ENCODE measurements at regions of chr14 and their contacts with region 1.

Region 1: DNA sequence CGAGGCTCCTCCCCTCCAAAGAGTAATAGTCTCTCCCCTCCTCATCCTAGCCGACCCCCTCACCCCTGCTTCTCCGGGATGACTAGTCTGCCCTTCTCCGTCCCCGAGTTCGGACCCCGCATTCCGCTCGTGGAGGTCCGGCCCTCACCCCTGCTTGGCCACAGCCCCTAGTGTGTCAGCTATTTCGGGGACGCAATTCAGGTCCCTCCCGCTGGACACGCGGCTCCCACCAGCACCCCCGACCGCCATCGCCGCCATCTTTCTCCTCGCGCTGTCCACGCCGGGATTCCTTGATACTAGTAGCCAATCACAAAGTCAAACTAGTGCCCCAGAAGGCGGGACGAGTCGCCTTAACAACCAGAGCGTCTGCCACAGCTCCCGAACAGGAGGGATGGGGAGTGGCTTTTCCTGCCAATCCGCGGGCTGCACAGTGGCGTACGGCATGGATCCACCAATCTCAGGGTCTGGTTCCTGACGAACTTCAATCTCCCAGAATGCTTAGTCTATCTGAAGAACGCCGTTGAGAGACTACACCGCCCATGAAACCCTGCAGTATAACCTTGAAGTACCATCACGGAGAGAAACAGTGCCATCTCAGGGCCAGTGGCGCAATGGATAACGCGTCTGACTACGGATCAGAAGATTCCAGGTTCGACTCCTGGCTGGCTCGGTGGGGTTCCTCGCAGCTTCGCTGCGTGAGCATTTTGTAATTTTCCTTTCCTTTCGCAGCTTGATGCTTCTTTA is at the start of gene PRMT5:
- DNase-seq: peak; percentile 93 to 100 (median 97)
- ATAC-seq: peak; percentile 96
- H3K4me3 ChIP-seq: peak within 1 kb of the TSS; percentile 91
- H3K4me3 Mint-ChIP-seq: no peak within 1 kb of the TSS
- H3K27ac ChIP-seq: peak within 1 kb of the TSS; percentile 79 to 88
- H3K27ac Mint-ChIP-seq: no peak within 1 kb of the TSS
- H3K4me1 ChIP-seq: peaks cover 30% of the 10 kb centered on the region
- H3K4me1 Mint-ChIP-seq: peaks cover 11% of the 10 kb centered on the region
- H3K27me3 ChIP-seq: no peaks in the 10 kb centered on the region
- H3K27me3 Mint-ChIP-seq: no peaks in the 10 kb centered on the region
- CTCF ChIP-seq: no peak
- total RNA-seq, gene PRMT5: 15.6 to 19.3 TPM

Region 2: DNA sequence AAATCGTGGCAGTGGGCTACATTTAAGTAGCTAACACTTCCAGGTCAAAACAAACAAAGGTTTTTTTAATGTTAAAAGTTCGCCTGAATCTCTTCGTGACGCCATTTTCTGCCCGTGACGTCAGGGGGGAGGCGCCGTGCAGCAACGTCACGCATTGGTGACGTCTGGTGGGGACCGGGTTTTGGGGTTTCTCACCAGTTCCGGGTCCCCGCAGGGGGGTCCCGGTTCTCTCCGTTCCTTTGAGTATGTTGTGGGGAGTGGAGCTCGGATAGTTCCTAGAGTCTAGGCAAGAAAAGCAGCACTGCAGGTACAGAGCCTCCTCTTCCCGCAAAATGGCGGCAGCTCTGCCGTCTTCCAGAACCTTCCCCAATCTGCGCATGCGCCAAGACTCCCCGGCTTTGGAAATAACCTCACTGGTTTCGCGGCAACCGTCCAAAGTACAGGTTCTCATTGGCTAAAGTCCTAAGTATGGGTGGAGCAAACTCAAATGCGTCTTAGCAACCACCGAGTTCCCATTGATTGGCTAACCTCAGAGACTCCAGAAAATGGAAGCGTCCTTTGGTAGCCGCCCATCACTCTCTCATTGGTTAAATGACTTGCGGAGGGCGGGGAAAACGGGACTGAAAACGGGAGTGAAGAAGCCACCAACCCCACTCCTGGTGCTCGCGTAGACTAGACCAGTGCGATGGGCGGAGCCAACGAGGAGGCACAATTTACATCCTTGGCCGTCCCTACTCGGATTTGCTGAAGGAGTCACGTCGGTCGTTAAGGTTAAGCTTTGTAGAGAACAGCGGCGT is 10.3 kb before region 1 on chr14 and contains the start of gene RBM23:
- CTCF ChIA-PET with region 1: interaction called, 16 read pairs
- POLR2A ChIA-PET with region 1: interaction called, 68 read pairs
- intact Hi-C with region 1: loop called (anchors 1 kb)
- DNase-seq: peak; percentile 99 to 100 (median 100)
- ATAC-seq: peak; percentile 84
- H3K4me3 ChIP-seq: peak within 1 kb of the TSS; percentile 74
- H3K4me3 Mint-ChIP-seq: peak within 1 kb of the TSS; percentile 88
- H3K27ac ChIP-seq: peak within 1 kb of the TSS; percentile 99 to 100
- H3K27ac Mint-ChIP-seq: peak within 1 kb of the TSS; percentile 100
- H3K4me1 ChIP-seq: peaks cover 38% of the 10 kb centered on the region
- H3K4me1 Mint-ChIP-seq: peaks cover 50% of the 10 kb centered on the region
- H3K27me3 ChIP-seq: no peaks in the 10 kb centered on the region
- H3K27me3 Mint-ChIP-seq: peaks cover 4% of the 10 kb centered on the region
- CTCF ChIP-seq: no peak
- total RNA-seq, gene RBM23: 87.9 to 111 TPM

Region 3: DNA sequence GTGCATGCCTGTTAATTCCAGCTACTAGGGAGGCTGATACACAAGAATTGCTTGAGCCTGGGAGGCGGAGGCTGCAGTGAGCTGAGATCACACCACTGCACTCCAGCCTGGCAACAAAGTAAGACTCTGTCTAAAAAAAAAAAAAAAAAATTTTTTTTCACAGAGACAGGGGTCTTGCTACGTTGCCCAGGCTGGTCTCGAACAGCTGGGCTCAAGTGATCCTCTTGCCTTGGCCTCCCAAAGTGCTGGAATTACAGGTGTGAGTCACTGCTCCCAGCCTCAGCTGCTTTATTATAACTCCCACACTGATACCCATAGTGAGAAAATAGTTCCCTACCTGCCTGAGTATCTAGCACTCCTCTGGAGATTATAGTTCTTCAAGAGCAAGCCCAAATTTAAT is 16.4 kb after region 1 on chr14:
- CTCF ChIA-PET with region 1: interaction called, 4 read pairs
- POLR2A ChIA-PET with region 1: interaction called, 10 read pairs
- intact Hi-C with region 1: no loop called
- DNase-seq: no peak
- ATAC-seq: no peak
- H3K4me3 ChIP-seq: no peak overlapping the region
- H3K4me3 Mint-ChIP-seq: no peak overlapping the region
- H3K27ac ChIP-seq: no peak overlapping the region
- H3K27ac Mint-ChIP-seq: no peak overlapping the region
- H3K4me1 ChIP-seq: no peaks in the 10 kb centered on the region
- H3K4me1 Mint-ChIP-seq: no peaks in the 10 kb centered on the region
- H3K27me3 ChIP-seq: no peaks in the 10 kb centered on the region
- H3K27me3 Mint-ChIP-seq: no peaks in the 10 kb centered on the region
- CTCF ChIP-seq: no peak

Region 4: GRCh38 chr14:22955702-22956569 is 26.7 kb after region 1 on chr14:
- CTCF ChIA-PET with region 1: interaction called, 8 read pairs
- POLR2A ChIA-PET with region 1: interaction called, 42 read pairs
- intact Hi-C with region 1: loop called (anchors 1 to 2 kb)
- DNase-seq: no peak
- ATAC-seq: no peak
- H3K4me3 ChIP-seq: peak overlapping the region; percentile 89
- H3K4me3 Mint-ChIP-seq: peak overlapping the region; percentile 92
- H3K27ac ChIP-seq: peak overlapping the region; percentile 63 to 83
- H3K27ac Mint-ChIP-seq: peak overlapping the region; percentile 83
- H3K4me1 ChIP-seq: peaks cover 21% of the 10 kb centered on the region
- H3K4me1 Mint-ChIP-seq: peaks cover 18% of the 10 kb centered on the region
- H3K27me3 ChIP-seq: no peaks in the 10 kb centered on the region
- H3K27me3 Mint-ChIP-seq: no peaks in the 10 kb centered on the region
- CTCF ChIP-seq: no peak

Region 5: DNA sequence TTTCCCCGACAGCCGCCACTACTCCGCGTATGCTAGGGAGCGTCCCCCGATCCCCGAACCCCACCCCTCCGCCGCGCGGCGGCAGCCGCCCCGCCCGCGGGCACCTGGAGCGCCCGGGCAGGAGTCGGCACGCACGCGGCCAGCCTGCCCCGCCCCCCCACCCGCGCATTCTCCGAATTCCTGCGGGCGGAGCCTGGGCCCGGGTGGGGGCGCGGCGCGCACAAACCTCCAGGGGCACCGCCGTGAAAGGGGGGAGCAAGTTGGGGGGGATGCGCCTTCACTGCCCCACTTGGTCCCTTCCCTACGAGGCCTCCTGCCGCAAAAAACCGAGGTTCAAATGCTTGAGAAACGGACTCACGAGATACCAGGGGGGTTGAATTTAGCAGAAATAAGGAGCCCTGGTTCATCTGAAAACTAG is 51.4 kb after region 1 on chr14:
- CTCF ChIA-PET with region 1: interaction called, 17 read pairs
- POLR2A ChIA-PET with region 1: interaction called, 11 read pairs
- intact Hi-C with region 1: loop called (anchors 2 kb)
- DNase-seq: peak in 8 of 14 experiments; percentile 6 to 64 (median 33)
- ATAC-seq: peak; percentile 28
- H3K4me3 ChIP-seq: peak overlapping the region; percentile 84
- H3K4me3 Mint-ChIP-seq: peak overlapping the region; percentile 78
- H3K27ac ChIP-seq: no peak overlapping the region
- H3K27ac Mint-ChIP-seq: no peak overlapping the region
- H3K4me1 ChIP-seq: peaks cover 34% of the 10 kb centered on the region
- H3K4me1 Mint-ChIP-seq: peaks cover 9% of the 10 kb centered on the region
- H3K27me3 ChIP-seq: peaks cover 4 to 5% of the 10 kb centered on the region in 2 experiments
- H3K27me3 Mint-ChIP-seq: no peaks in the 10 kb centered on the region
- CTCF ChIP-seq: no peak

Region 6: GRCh38 chr14:23294734-23295561 is 365.7 kb after region 1 on chr14:
- CTCF ChIA-PET with region 1: no interaction called
- POLR2A ChIA-PET with region 1: no interaction called
- intact Hi-C with region 1: loop called in 1 of 2 experiments (anchors 10 kb)
- DNase-seq: peak; percentile 28 to 87 (median 48)
- ATAC-seq: peak; percentile 88
- H3K4me3 ChIP-seq: no peak overlapping the region
- H3K4me3 Mint-ChIP-seq: peak overlapping the region; percentile 27
- H3K27ac ChIP-seq: no peak overlapping the region
- H3K27ac Mint-ChIP-seq: peak overlapping the region; percentile 37
- H3K4me1 ChIP-seq: peaks cover 13% of the 10 kb centered on the region
- H3K4me1 Mint-ChIP-seq: peaks cover 28% of the 10 kb centered on the region
- H3K27me3 ChIP-seq: no peaks in the 10 kb centered on the region
- H3K27me3 Mint-ChIP-seq: no peaks in the 10 kb centered on the region
- CTCF ChIP-seq: peak; percentile 86

Region 7: DNA sequence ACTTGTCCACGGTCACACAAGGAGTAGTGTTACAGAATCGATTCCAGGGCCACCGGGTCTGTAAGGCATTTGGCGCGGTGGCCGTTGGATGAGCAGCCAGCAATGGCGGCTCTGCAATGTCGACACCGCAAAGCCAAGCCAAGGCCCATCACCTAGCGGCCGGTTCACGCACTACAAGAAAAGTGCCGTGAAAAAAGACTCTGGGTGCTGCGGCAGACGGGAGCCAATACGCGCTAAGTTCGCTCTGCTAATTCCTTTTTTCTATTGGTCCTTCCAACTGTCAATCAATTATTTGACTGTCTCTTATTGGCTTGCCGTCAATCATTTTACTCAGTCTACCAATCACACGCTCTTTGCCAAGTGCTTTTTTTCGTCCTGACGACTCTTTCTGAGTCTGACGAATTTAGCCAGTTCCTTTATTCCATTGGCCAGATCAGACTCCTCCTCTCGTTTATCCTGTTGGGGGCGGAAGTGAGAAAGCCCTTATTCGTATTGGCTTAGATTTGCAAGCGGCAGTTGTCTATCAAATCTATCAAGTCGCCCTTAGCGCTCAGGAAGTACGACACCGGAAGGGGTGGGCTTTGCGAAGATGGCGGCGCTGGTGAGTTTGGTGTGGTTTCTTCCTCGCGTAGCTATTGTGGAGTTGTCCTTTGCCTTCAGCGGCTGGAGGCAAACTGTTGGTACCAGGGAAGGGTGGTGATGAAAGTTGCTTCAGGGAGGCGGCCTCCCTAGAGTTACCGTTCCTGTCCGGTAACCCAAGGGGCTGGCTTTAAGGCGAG is 540.0 kb after region 1 on chr14 and contains the start of gene NGDN:
- CTCF ChIA-PET with region 1: no interaction called
- POLR2A ChIA-PET with region 1: no interaction called
- intact Hi-C with region 1: loop called in 1 of 2 experiments (anchors 10 kb)
- DNase-seq: peak; percentile 81 to 99 (median 88)
- ATAC-seq: peak; percentile 90
- H3K4me3 ChIP-seq: peak within 1 kb of the TSS; percentile 87
- H3K4me3 Mint-ChIP-seq: no peak within 1 kb of the TSS
- H3K27ac ChIP-seq: peak within 1 kb of the TSS; percentile 67 to 92
- H3K27ac Mint-ChIP-seq: no peak within 1 kb of the TSS
- H3K4me1 ChIP-seq: peaks cover 14% of the 10 kb centered on the region
- H3K4me1 Mint-ChIP-seq: peaks cover 7% of the 10 kb centered on the region
- H3K27me3 ChIP-seq: no peaks in the 10 kb centered on the region
- H3K27me3 Mint-ChIP-seq: no peaks in the 10 kb centered on the region
- CTCF ChIP-seq: peak; percentile 74
- total RNA-seq, gene NGDN: 146 to 149 TPM